ENCODE measurements at regions of chrX and their contacts with region 1.

Region 1: GRCh38 chrX:130144509-130144908 is 21.1 kb downstream of the AIFM1 start:
- DNase-seq: no peak
- H3K4me3 Mint-ChIP-seq: no peak overlapping the region
- H3K27ac Mint-ChIP-seq: no peak overlapping the region
- H3K4me1 Mint-ChIP-seq: no peaks in the 10 kb centered on the region
- H3K27me3 Mint-ChIP-seq: no peaks in the 10 kb centered on the region
- CTCF ChIP-seq: no peak

Region 2: DNA sequence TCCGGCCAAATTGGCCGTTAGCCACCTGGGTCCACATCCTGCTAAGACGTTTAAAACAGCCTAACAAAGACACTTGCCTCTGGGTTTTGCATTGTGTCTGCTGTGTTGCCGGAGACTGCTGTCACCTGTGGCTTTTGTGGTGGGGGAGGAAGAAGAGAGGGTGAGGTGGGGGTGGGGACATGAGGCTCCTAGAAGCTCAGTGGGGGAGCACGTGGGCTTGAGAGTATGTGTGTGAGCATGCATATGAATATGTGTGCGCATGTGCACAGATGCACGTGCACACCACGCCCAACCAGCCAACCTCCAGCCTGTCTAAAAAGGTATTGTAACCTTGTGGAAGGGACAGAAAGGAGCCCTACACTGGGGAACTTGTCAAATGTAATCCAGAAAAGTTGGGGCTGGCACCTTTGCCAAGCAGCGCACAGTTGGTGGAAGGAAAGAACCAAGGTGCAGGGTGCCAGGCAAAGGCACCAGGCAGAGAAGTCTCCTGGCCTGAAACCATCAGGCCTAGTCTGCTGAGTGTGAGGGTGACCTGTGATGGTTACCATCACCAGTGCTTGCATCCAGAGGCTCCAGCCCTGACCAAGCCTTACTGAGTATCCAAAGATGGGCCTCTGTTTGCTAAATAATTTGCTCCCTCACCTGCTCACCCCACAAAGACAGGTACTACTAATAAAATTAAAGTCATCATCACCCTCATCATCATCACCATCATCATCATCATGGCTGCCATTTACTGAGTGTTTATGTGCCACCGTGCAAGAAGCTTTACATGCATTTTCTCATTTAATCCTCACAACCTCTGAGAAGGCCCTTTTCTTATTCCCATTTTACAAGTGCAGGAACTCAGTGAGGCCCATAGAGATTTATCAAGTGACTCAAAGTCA is 374.8 kb before region 1 on chrX:
- CTCF ChIA-PET with region 1: no interaction called
- intact Hi-C with region 1: no loop called
- DNase-seq: no peak
- H3K4me3 Mint-ChIP-seq: no peak overlapping the region
- H3K27ac Mint-ChIP-seq: no peak overlapping the region
- H3K4me1 Mint-ChIP-seq: no peaks in the 10 kb centered on the region
- H3K27me3 Mint-ChIP-seq: no peaks in the 10 kb centered on the region
- CTCF ChIP-seq: no peak

Region 3: DNA sequence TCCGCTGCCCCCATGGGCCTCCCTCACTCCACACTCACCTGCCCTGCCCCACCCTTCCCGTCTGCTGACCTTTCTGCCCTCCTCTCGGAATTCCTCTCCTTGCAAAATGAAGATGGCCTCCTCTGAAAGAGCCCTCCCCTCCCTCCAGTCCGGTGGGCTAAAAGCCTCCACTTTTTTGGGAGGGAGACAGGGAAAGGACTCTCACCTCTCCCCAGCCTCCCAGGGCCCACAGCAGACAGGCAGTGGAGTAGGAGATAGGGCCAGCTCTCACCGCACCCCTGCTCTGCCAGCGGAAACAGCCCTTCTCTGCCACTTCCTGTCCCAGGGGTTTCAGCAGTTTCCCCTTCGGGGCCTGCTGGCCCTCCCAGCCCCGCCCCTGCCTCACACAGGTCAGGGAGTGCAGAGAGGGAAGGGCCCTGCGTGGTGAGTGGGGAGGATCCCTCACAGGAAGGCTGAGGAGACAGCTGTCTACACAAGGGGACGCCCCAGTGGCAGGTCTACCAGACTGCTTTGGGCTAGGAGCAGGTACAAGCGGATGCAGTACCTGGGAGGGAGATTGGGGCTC is 52.5 kb before region 1 on chrX:
- CTCF ChIA-PET with region 1: no interaction called
- intact Hi-C with region 1: no loop called
- DNase-seq: no peak
- H3K4me3 Mint-ChIP-seq: no peak overlapping the region
- H3K27ac Mint-ChIP-seq: no peak overlapping the region
- H3K4me1 Mint-ChIP-seq: peaks cover 7% of the 10 kb centered on the region
- H3K27me3 Mint-ChIP-seq: no peaks in the 10 kb centered on the region
- CTCF ChIP-seq: no peak

Region 4: GRCh38 chrX:130186651-130187050 is 42.1 kb after region 1 on chrX:
- CTCF ChIA-PET with region 1: interaction called, 14 read pairs
- intact Hi-C with region 1: no loop called
- DNase-seq: no peak
- H3K4me3 Mint-ChIP-seq: no peak overlapping the region
- H3K27ac Mint-ChIP-seq: no peak overlapping the region
- H3K4me1 Mint-ChIP-seq: no peaks in the 10 kb centered on the region
- H3K27me3 Mint-ChIP-seq: peaks cover 14% of the 10 kb centered on the region
- CTCF ChIP-seq: no peak

Region 5: GRCh38 chrX:130393451-130394074 is 249.1 kb after region 1 on chrX:
- CTCF ChIA-PET with region 1: no interaction called
- intact Hi-C with region 1: no loop called
- DNase-seq: peak; percentile 51
- H3K4me3 Mint-ChIP-seq: no peak overlapping the region
- H3K27ac Mint-ChIP-seq: no peak overlapping the region
- H3K4me1 Mint-ChIP-seq: no peaks in the 10 kb centered on the region
- H3K27me3 Mint-ChIP-seq: peaks cover 57% of the 10 kb centered on the region
- CTCF ChIP-seq: peak; percentile 45

Region 6: GRCh38 chrX:130552444-130553073 is 408.1 kb after region 1 on chrX:
- CTCF ChIA-PET with region 1: no interaction called
- intact Hi-C with region 1: no loop called
- DNase-seq: no peak
- H3K4me3 Mint-ChIP-seq: no peak overlapping the region
- H3K27ac Mint-ChIP-seq: no peak overlapping the region
- H3K4me1 Mint-ChIP-seq: peaks cover 10% of the 10 kb centered on the region
- H3K27me3 Mint-ChIP-seq: no peaks in the 10 kb centered on the region
- CTCF ChIP-seq: no peak

Measured in Calu3 (cell line).